CD4-positive, alpha-beta T cell (primary cell): ENCODE measurements at regions of chr12 and their contacts with region 1.

Region 1: DNA sequence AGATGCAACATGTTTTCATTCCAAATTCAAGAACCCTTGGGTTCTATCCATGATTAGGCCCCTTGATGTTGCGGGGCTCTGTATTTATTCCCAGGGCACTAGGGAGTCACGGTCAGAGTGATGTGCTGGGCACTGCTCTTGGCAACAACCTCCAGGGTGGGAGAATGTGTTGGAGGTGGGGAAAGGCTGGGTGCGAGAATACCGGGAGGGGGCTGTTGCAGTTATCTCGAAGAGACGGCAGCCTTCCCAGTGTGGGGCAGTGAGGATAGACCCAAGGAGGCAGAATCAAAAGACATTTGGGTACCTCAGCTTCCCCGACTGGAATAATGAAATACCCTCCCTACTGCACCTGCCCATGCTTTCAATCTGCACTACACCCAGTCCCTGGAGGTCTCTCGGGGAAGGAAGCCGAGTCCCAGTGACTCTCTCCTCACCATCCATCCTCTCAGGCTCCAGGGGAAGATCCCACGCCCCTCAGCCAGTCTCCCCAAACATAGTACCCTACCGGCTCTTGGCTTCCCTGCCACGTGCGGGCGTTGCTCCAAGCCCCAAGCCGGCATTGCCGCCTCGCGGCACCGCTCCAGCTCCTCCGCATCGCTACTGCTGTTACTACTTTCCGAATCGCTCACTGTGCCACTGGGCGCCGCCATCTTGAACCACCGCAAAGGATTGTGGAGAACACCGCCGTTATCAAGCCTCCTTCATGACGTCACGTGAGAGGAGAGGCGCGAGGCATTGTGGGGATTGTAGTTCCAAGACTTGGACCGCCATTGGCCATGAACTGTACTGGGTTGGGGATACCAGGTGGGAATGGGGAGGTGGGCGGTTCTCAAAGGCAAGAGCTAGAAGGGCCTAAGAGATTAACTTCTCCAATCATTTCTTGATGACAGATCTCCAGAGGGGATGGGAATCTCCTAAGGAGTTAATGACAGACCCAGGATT is at the start of gene C12orf43:
- DNase-seq: peak; percentile 84 to 95 (median 90)
- ATAC-seq: peak; percentile 99
- H3K4me3 ChIP-seq: peak within 1 kb of the TSS; percentile 74
- H3K4me3 Mint-ChIP-seq: peak within 1 kb of the TSS; percentile 90
- H3K27ac ChIP-seq: peak within 1 kb of the TSS; percentile 73 to 74
- H3K27ac Mint-ChIP-seq: peak within 1 kb of the TSS; percentile 82
- H3K4me1 ChIP-seq: peaks cover 11% of the 10 kb centered on the region
- H3K4me1 Mint-ChIP-seq: peaks cover 16% of the 10 kb centered on the region
- H3K27me3 ChIP-seq: no peaks in the 10 kb centered on the region
- H3K27me3 Mint-ChIP-seq: no peaks in the 10 kb centered on the region
- CTCF ChIP-seq: no peak
- total RNA-seq, gene C12orf43: 14.4 to 15.8 TPM

Region 2: DNA sequence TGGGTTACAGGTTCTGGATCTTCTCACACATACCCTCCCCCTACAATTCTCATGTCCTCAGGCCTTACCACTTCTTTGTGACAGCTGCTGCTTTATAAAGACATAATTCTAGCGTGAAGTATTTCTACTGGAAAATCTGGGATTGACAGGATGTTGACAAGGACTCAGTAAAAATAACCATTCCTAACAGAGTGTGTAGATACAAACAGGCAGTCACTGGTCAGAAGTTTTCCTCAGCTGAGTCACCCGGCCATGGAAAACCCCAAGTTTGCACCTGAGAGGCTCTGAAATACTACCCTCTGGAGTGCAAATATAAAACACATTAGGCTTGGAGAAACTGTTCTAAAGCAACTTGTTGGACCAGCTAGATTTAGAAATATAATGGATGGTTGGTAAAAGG is 166.3 kb before region 1 on chr12:
- CTCF ChIA-PET with region 1: no interaction called
- POLR2A ChIA-PET with region 1: no interaction called
- intact Hi-C with region 1: no loop called
- DNase-seq: no peak
- ATAC-seq: no peak
- H3K4me3 ChIP-seq: no peak overlapping the region
- H3K4me3 Mint-ChIP-seq: no peak overlapping the region
- H3K27ac ChIP-seq: no peak overlapping the region
- H3K27ac Mint-ChIP-seq: no peak overlapping the region
- H3K4me1 ChIP-seq: peaks cover 26% of the 10 kb centered on the region
- H3K4me1 Mint-ChIP-seq: peaks cover 67% of the 10 kb centered on the region
- H3K27me3 ChIP-seq: no peaks in the 10 kb centered on the region
- H3K27me3 Mint-ChIP-seq: no peaks in the 10 kb centered on the region
- CTCF ChIP-seq: no peak

Region 3: GRCh38 chr12:121038861-121039666 is 23.0 kb after region 1 on chr12 and contains the start of gene OASL:
- CTCF ChIA-PET with region 1: interaction called, 3 read pairs
- POLR2A ChIA-PET with region 1: interaction called, 5 read pairs
- intact Hi-C with region 1: loop called in 1 of 2 experiments (anchors 2 kb)
- DNase-seq: peak; percentile 38 to 88 (median 61)
- ATAC-seq: peak; percentile 71
- H3K4me3 ChIP-seq: peak within 1 kb of the TSS; percentile 87
- H3K4me3 Mint-ChIP-seq: peak within 1 kb of the TSS; percentile 96
- H3K27ac ChIP-seq: peak within 1 kb of the TSS; percentile 37 to 56
- H3K27ac Mint-ChIP-seq: peak within 1 kb of the TSS; percentile 94
- H3K4me1 ChIP-seq: peaks cover 58% of the 10 kb centered on the region
- H3K4me1 Mint-ChIP-seq: peaks cover 42% of the 10 kb centered on the region
- H3K27me3 ChIP-seq: no peaks in the 10 kb centered on the region
- H3K27me3 Mint-ChIP-seq: no peaks in the 10 kb centered on the region
- CTCF ChIP-seq: no peak
- total RNA-seq, gene OASL: 33.0 to 34.7 TPM

Region 4: DNA sequence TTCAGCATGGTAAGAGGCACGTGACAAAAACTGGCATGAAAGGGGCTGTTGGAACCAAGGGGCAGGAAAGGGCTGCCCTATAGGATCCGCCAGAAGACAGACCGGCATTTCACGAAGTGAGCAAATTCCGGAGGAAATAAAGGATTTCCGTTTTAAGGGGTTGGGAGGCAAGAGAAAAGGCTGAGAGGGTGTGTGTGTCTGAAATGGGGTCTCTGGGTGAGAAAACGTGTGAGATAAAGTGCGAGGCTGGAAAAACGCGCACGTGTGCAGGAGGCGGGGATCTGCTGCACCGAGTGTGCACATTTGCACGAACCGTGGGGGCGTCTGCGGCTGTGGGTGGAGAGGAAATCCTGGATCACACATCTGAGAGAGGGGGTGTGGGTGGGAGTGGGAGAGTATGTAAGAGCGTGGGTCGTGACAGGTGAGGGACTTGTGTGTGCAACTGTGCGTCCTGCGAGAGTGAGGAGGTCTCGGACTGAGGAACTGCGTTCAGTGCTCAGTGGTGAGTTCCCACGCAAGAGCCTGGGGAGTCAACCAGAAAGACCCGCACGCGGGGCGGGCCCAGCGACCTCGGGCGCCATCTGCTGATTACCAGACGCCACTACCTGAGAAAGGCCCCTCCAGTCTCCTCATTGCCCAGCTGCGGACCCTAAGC is 79.6 kb after region 1 on chr12:
- CTCF ChIA-PET with region 1: interaction called, 3 read pairs
- POLR2A ChIA-PET with region 1: no interaction called
- intact Hi-C with region 1: loop called (anchors 5 to 10 kb)
- DNase-seq: peak; percentile 60 to 87 (median 72)
- ATAC-seq: peak; percentile 72
- H3K4me3 ChIP-seq: peak overlapping the region; percentile 42
- H3K4me3 Mint-ChIP-seq: peak overlapping the region; percentile 76
- H3K27ac ChIP-seq: no peak overlapping the region
- H3K27ac Mint-ChIP-seq: no peak overlapping the region
- H3K4me1 ChIP-seq: peaks cover 36% of the 10 kb centered on the region
- H3K4me1 Mint-ChIP-seq: peaks cover 54% of the 10 kb centered on the region
- H3K27me3 ChIP-seq: peaks cover 0 to 3% of the 10 kb centered on the region in 2 experiments
- H3K27me3 Mint-ChIP-seq: no peaks in the 10 kb centered on the region
- CTCF ChIP-seq: peak; percentile 89

Region 5: DNA sequence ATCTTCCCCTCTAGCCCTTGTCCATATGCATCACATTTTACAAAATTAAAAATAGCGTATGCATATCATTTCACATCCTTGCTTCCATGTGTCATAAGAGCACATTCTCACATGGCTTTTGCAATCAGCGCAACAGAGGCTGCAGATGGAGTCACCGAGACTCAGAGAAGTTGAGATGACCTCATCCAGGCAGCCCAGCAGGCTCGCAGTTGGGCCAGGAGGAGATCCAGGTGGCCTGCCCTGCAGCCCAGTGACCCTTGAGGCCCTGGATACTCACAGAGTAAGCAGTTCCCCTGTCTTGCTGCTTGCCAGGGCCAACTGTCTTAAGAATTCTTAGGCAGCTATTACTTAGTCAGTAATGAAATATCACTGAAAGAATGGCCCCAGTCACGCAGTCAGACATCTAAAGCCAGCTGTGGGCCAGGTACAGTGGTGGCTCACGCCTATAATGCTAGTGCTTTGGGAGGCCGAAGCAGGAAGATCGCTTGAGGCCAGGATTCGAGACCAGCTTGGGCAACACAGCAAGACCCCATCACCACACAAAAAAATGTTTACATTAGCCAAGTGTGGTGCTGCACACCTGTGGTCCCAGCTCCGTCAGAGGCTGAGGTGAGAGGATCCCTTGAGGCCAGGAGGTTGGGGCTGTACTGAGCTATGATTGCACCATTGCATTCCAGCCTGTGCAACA is 271.3 kb after region 1 on chr12:
- CTCF ChIA-PET with region 1: no interaction called
- POLR2A ChIA-PET with region 1: no interaction called
- intact Hi-C with region 1: no loop called
- DNase-seq: peak in 2 of 14 experiments; percentile 44 to 59
- ATAC-seq: no peak
- H3K4me3 ChIP-seq: no peak overlapping the region
- H3K4me3 Mint-ChIP-seq: no peak overlapping the region
- H3K27ac ChIP-seq: no peak overlapping the region
- H3K27ac Mint-ChIP-seq: no peak overlapping the region
- H3K4me1 ChIP-seq: peaks cover 8% of the 10 kb centered on the region
- H3K4me1 Mint-ChIP-seq: peaks cover 15% of the 10 kb centered on the region
- H3K27me3 ChIP-seq: no peaks in the 10 kb centered on the region
- H3K27me3 Mint-ChIP-seq: no peaks in the 10 kb centered on the region
- CTCF ChIP-seq: no peak